PC-3 (cell line): ENCODE measurements at regions of chr1 and their contacts with region 1.

Region 1: DNA sequence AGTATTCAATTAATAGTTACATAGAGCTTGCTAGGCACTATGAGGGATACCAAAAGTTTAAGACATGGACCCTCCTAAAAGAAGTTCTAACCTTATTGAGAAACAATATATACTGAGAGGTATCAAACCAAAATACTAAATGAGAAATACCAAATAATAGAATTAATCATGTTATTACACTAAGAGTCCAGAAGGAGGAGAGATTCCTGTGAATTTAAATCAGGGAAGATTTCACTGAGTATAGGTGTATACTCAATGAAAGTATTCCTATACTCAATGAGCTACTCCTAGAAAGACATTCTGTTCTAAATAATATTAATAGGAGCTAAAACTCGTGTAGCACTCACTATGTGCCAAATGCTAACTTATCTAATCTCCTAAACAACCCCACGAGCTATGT is 9.4 kb downstream of the CR1L start:
- DNase-seq: peak; percentile 58
- ATAC-seq: peak; percentile 79
- H3K4me3 ChIP-seq: no peak overlapping the region
- H3K27ac ChIP-seq: no peak overlapping the region
- H3K4me1 ChIP-seq: no peaks in the 10 kb centered on the region
- H3K27me3 ChIP-seq: peaks cover 65% of the 10 kb centered on the region
- CTCF ChIP-seq: peak; percentile 65

Region 2: DNA sequence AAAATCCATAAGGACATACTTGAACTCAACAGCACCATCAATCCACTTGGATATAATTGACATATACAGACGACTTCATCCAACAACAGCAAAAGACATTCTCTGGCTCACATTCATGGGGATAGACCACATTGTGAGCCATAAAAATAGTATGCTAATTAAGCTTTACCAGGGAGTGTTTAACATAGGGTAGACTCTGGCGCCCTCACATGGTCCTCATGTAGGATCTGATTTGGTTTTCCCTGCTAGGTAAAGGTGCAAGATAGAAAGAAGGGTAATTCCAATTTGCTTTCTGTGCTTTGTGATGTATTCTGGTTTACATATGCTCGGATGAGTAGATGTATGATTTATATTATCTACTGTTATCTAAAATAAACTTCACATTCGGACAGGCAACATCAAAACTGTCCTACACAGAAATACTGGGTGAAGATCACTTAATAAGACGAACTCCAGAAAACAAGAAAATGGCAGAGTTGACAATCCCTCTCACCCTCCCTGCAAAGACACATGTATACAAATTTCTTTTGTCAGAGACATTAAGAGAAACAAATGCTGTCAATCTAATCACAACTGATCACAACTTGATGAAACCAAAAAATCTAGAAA is 18.3 kb after region 1 on chr1:
- CTCF ChIA-PET with region 1: interaction called, 4 read pairs
- POLR2A ChIA-PET with region 1: no interaction called
- intact Hi-C with region 1: loop called (anchors 1 kb)
- DNase-seq: peak; percentile 86
- ATAC-seq: peak; percentile 97
- H3K4me3 ChIP-seq: no peak overlapping the region
- H3K27ac ChIP-seq: no peak overlapping the region
- H3K4me1 ChIP-seq: no peaks in the 10 kb centered on the region
- H3K27me3 ChIP-seq: peaks cover 62% of the 10 kb centered on the region
- CTCF ChIP-seq: peak; percentile 98

Region 3: GRCh38 chr1:207823880-207824566 is 169.7 kb after region 1 on chr1:
- CTCF ChIA-PET with region 1: no interaction called
- POLR2A ChIA-PET with region 1: no interaction called
- intact Hi-C with region 1: no loop called
- DNase-seq: peak; percentile 84
- ATAC-seq: peak; percentile 20
- H3K4me3 ChIP-seq: no peak overlapping the region
- H3K27ac ChIP-seq: peak overlapping the region; percentile 53
- H3K4me1 ChIP-seq: peaks cover 48% of the 10 kb centered on the region
- H3K27me3 ChIP-seq: no peaks in the 10 kb centered on the region
- CTCF ChIP-seq: peak; percentile 54